ENCODE measurements at regions of chr19 and their contacts with region 1.

Region 1: DNA sequence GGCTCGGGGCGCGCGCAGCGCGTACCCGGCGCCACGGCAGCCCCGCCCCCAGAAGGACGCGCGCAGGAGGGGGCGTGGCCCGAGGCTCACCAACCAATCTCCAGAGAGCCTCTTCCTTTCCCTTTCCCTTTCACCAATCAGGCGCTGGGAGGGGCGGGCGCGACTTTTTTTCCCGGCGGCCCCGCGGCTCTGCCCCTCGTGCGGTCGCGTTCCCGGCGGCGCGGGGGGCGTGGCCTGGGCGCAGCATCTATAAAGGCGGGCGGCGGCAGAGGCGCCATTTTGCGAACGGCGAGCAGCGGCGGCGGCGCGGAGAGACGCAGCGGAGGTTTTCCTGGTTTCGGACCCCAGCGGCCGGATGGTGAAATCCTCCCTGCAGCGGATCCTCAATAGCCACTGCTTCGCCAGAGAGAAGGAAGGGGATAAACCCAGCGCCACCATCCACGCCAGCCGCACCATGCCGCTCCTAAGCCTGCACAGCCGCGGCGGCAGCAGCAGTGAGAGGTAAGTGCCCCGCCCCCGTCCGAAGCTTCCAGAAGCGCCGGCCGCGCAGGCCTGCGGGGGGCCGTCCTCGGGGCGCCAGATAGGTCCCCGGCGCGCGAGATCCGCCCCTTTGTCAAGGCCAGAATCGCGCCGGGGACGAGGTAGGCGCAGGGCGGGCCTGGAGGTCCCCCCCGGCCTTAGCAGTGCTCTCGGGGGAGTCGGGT is 12.6 kb downstream of the PEAK3 start:
- DNase-seq: peak; percentile 94 to 100 (median 96)
- ATAC-seq: peak; percentile 71
- H3K4me3 ChIP-seq: peak overlapping the region; percentile 91
- H3K27ac ChIP-seq: peak overlapping the region; percentile 94
- H3K4me1 ChIP-seq: peaks cover 25 to 76% of the 10 kb centered on the region in 2 experiments
- H3K27me3 ChIP-seq: no peaks in the 10 kb centered on the region
- CTCF ChIP-seq: peak in 1 of 3 experiments; percentile 21; a peak in 2 of 6 replicates
- EP300 ChIP-seq: no peak; the same call in 1 of the 2 replicates
- POLR2A ChIP-seq: peak; percentile 100
- RAD21 ChIP-seq: peak in 1 of 2 experiments; percentile 15; a peak in 1 of 4 replicates

Region 2: DNA sequence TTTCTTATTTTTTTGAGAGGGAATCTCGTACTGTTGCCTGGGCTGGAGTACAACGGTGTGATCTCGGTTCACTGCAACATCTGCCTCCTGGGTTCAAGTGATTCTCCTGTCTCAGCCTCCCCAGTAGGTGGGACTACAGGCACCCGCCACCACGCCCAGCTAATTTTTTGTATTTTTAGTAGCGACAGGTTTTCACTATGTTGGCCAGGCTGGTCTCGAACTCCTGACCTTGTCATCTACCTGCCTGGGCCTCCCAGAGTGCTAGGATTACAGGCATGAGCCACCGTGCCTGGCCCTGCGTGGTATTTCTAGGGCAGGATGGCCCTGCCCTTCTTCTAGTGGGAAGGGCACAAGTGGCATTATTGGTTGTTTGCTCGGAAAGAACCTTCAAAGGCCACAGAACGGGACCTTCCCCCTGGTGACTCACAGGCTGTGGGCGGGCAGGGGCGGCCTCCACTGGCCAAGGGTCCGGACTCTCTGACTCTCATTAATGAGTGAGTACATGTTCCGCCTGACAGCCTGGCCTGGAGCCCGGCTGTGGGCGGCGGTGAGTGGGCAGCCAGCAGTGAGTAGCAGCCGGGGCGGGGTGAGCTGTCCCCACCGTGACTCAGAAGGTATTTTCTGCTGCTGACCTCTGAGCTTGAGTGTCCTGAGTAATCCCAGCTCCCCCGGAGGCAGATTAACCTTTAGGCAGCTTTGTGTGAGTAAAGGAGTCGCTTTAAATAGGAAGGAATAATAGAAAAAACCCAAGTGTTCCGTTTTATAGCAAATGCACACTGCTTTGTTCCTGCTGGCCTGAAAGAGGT is 100.6 kb before region 1 on chr19:
- CTCF ChIA-PET with region 1: no interaction called
- POLR2A ChIA-PET with region 1: interaction called, 3 read pairs
- in situ Hi-C with region 1: no loop called
- intact Hi-C with region 1: loop called (anchors 10 kb)
- DNase-seq: peak; percentile 74 to 97 (median 82)
- ATAC-seq: peak; percentile 91
- H3K4me3 ChIP-seq: peak overlapping the region; percentile 19
- H3K27ac ChIP-seq: peak overlapping the region; percentile 92
- H3K4me1 ChIP-seq: peaks cover 63 to 91% of the 10 kb centered on the region in 2 experiments
- H3K27me3 ChIP-seq: no peaks in the 10 kb centered on the region
- CTCF ChIP-seq: peak; percentile 35 to 58 (median 39); a peak in 3 of 6 replicates
- EP300 ChIP-seq: peak; percentile 79
- POLR2A ChIP-seq: peak; percentile 61
- RAD21 ChIP-seq: peak; percentile 39 to 56

Region 3: GRCh38 chr19:2289714-2290435 is 20.5 kb after region 1 on chr19:
- CTCF ChIA-PET with region 1: no interaction called
- POLR2A ChIA-PET with region 1: interaction called, 18 read pairs
- in situ Hi-C with region 1: no loop called
- intact Hi-C with region 1: no loop called
- DNase-seq: peak; percentile 52 to 67 (median 56)
- ATAC-seq: peak; percentile 71
- H3K4me3 ChIP-seq: peak overlapping the region; percentile 43
- H3K27ac ChIP-seq: peak overlapping the region; percentile 76; the same call in 1 of the 3 replicates
- H3K4me1 ChIP-seq: peaks cover 10 to 51% of the 10 kb centered on the region in 2 experiments
- H3K27me3 ChIP-seq: no peaks in the 10 kb centered on the region
- CTCF ChIP-seq: no peak
- EP300 ChIP-seq: no peak
- POLR2A ChIP-seq: no peak
- RAD21 ChIP-seq: no peak

Region 4: GRCh38 chr19:2337329-2338043 is 68.1 kb after region 1 on chr19:
- CTCF ChIA-PET with region 1: no interaction called
- POLR2A ChIA-PET with region 1: no interaction called
- in situ Hi-C with region 1: no loop called
- intact Hi-C with region 1: no loop called
- DNase-seq: no peak
- ATAC-seq: peak; percentile 52; the same call in 2 of the 3 replicates
- H3K4me3 ChIP-seq: no peak overlapping the region
- H3K27ac ChIP-seq: no peak overlapping the region
- H3K4me1 ChIP-seq: peaks cover 5 to 73% of the 10 kb centered on the region in 2 experiments; a peak in 3 of 5 replicates
- H3K27me3 ChIP-seq: no peaks in the 10 kb centered on the region
- CTCF ChIP-seq: 0 out of 6 replicates have a peak, but pooled peaks of 1 of the 3 experiments have one; percentile 7
- EP300 ChIP-seq: no peak
- POLR2A ChIP-seq: no peak
- RAD21 ChIP-seq: no peak

Region 5: GRCh38 chr19:2436926-2437465 is 167.6 kb after region 1 on chr19:
- CTCF ChIA-PET with region 1: no interaction called
- POLR2A ChIA-PET with region 1: no interaction called
- in situ Hi-C with region 1: no loop called
- intact Hi-C with region 1: no loop called
- DNase-seq: no peak
- ATAC-seq: no peak
- H3K4me3 ChIP-seq: no peak overlapping the region
- H3K27ac ChIP-seq: no peak overlapping the region
- H3K4me1 ChIP-seq: peaks cover 0 to 20% of the 10 kb centered on the region in 2 experiments; a peak in 1 of 5 replicates
- H3K27me3 ChIP-seq: no peaks in the 10 kb centered on the region
- CTCF ChIP-seq: no peak
- EP300 ChIP-seq: no peak
- POLR2A ChIP-seq: no peak
- RAD21 ChIP-seq: no peak

Region 6: DNA sequence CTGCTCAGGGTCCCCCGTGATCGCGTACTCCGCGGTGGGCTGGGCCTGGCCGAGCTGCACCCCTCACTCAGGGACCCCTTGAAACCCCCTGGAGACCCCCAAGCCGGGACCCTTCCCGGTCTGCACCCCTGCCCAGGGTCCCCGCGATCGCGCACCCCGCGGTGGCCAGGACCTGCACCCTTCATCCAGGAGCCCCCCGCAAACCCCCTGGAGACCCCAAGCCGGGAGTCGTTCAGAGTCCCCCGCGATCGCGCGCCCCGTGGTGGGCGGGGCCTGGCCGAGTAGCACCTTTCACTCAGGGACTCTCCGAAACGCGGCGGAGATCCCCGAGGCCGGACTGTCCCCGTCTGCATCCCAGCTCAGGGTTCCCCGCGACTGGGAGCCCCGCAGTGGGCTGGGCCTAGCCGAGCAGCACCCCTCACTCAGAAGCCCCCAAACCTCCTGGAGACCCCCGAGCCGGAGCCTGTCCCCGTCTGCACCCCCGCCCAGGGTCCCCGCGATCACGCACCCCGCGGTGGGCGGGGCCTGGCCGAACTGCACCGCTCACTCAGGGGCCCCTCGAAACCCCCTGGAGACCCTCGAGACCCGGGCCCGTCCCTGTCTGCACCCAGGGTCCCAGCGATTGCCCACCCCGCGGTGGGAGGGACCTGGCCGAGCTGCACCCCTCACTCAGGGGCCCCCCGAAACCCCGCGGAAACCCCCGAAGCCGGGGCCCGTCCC is 186.6 kb after region 1 on chr19:
- CTCF ChIA-PET with region 1: no interaction called
- POLR2A ChIA-PET with region 1: no interaction called
- in situ Hi-C with region 1: no loop called
- intact Hi-C with region 1: no loop called
- DNase-seq: peak; percentile 66 to 76 (median 72)
- ATAC-seq: peak; percentile 79
- H3K4me3 ChIP-seq: peak overlapping the region; percentile 100
- H3K27ac ChIP-seq: peak overlapping the region; percentile 90
- H3K4me1 ChIP-seq: peaks cover 5 to 49% of the 10 kb centered on the region in 2 experiments; a peak in 3 of 5 replicates
- H3K27me3 ChIP-seq: no peaks in the 10 kb centered on the region
- CTCF ChIP-seq: no peak
- EP300 ChIP-seq: no peak
- POLR2A ChIP-seq: no peak
- RAD21 ChIP-seq: no peak